ENCODE measurements at regions of chr10 and their contacts with region 1.

Region 1: DNA sequence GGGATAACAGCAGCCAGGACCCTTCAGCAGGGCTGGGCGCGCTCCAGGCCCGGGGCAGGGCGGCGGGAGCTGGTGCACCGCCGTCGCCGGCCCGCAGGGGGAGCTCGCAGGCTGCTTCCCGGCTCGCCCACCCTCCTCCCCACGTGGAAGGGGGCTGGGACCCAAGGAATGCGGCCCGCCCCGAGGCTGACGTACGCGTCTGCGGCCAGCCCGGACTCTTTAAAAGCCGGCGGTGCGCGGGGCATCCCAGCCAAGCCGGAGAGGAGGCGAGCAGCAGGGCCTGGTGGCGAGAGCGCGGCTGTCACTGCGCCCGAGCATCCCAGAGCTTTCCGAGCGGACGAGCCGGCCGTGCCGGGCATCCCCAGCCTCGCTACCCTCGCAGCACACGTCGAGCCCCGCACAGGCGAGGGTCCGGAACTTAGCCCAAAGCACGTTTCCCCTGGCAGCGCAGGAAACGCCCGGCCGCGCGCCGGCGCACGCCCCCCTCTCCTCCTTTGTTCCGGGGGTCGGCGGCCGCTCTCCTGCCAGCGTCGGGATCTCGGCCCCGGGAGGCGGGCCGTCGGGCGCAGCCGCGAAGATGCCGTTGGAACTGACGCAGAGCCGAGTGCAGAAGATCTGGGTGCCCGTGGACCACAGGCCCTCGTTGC is at the start of gene PFKFB3:
- DNase-seq: peak; percentile 94 to 97
- H3K4me3 ChIP-seq: peak within 1 kb of the TSS; percentile 85 to 89
- H3K27ac ChIP-seq: peak within 1 kb of the TSS; percentile 94 to 95
- H3K4me1 ChIP-seq: peaks cover 0 to 58% (median 31%) of the 10 kb centered on the region in 4 donors
- H3K27me3 ChIP-seq: no peaks in the 10 kb centered on the region
- CTCF ChIP-seq: peak; percentile 97 to 99

Region 2: DNA sequence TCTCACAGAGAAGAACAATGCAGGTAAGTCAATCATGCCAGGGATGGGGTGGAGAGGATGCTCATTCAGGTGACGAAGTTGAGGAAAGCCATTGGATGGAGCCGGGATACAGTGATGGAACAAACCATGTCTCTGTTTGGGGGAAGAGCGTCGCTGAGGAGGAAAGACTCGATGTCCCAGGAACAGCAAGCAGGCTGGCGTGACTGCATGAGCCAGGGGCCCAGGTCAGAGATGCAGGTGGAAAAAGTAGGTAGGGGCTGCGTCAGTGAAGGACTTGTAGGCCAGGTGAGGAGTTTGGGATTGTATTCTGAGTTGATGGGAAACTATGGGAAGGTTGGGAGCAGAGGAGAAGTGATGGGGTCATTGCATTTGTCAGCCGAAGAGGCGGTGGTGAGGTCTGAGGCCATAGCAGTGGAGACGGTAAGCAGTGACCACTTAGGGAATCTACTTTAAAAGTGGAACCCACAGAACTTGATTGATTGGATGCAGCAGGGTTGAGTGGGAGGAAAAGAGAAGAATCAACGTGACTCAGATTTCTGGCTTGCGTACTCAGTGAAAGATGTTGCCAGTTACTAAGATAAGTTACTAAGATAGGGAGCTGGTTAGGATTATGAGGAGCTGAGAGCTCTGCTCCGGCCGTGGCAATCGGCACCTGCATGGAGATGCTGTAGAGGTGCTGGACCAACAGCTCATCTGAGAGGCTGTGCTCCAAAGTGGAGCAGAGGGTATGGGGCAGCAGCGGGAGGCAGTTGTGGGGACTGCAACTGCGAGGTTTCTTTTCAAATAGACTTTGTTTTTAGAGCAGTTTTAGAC is 128.1 kb before region 1 on chr10:
- intact Hi-C with region 1: no loop called
- DNase-seq: peak in 1 of 2 donors; percentile 21
- H3K4me3 ChIP-seq: no peak overlapping the region
- H3K27ac ChIP-seq: no peak overlapping the region
- H3K4me1 ChIP-seq: no peaks in the 10 kb centered on the region
- H3K27me3 ChIP-seq: peaks cover 0 to 31% of the 10 kb centered on the region in 2 donors
- CTCF ChIP-seq: no peak

Region 3: DNA sequence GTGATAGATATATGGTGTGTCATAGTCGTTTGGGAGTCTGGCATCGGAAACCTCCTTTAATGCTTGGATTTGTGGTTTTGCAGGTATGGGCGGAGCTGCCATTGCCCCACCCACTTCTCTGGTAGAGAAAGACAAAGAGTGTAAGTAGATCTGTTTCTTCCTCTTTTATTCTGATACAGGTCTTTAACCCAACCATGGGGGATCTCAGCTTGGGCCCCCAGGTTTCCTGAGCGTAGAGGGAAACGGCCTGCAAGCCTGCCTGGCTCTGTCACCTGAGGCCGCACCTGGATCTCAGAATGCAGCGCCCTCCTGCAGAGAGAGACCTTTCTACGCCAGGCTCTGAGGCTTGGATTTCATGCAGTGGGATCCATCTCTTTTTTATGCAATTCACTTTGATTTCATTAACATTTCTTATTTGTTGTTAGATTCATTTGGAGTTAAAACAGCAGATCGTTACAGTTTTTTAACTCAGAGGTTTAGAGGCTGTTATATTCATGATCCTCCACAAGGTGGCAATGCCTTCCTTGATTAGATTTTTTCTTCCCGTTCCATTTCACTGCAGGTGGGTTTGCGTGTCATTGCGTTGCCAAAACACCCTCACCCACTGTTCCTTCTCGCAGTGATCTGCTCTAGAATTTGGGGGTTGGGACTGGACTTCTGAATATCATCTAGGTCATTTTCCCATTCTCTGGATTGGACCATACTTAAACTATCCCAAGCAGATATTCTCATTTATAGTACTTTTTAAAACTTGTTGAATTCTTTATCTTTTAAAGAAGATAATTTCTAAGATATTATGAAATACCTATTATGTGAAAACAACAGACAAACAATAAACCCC is 94.0 kb before region 1 on chr10:
- intact Hi-C with region 1: loop called (anchors 5 kb)
- DNase-seq: no peak
- H3K4me3 ChIP-seq: no peak overlapping the region
- H3K27ac ChIP-seq: no peak overlapping the region
- H3K4me1 ChIP-seq: peaks cover 0 to 3% (median 0%) of the 10 kb centered on the region in 4 donors
- H3K27me3 ChIP-seq: no peaks in the 10 kb centered on the region
- CTCF ChIP-seq: peak; percentile 77 to 82

Region 4: GRCh38 chr10:6144406-6145165 is 58.2 kb before region 1 on chr10:
- intact Hi-C with region 1: loop called (anchors 2 kb)
- DNase-seq: peak; percentile 92 to 94
- H3K4me3 ChIP-seq: peak overlapping the region; percentile 82 to 92
- H3K27ac ChIP-seq: peak overlapping the region; percentile 82 to 89
- H3K4me1 ChIP-seq: peaks cover 0 to 46% (median 23%) of the 10 kb centered on the region in 4 donors
- H3K27me3 ChIP-seq: peaks cover 0 to 3% of the 10 kb centered on the region in 2 donors
- CTCF ChIP-seq: no peak

Region 5: GRCh38 chr10:6163364-6164270 is 39.2 kb before region 1 on chr10:
- intact Hi-C with region 1: loop called (anchors 5 kb)
- DNase-seq: peak; percentile 81 to 95
- H3K4me3 ChIP-seq: peak overlapping the region; percentile 71 to 79
- H3K27ac ChIP-seq: peak overlapping the region; percentile 79 to 87
- H3K4me1 ChIP-seq: peaks cover 0 to 27% (median 12%) of the 10 kb centered on the region in 4 donors
- H3K27me3 ChIP-seq: no peaks in the 10 kb centered on the region
- CTCF ChIP-seq: peak in 1 of 2 experiments; percentile 20

Region 6: DNA sequence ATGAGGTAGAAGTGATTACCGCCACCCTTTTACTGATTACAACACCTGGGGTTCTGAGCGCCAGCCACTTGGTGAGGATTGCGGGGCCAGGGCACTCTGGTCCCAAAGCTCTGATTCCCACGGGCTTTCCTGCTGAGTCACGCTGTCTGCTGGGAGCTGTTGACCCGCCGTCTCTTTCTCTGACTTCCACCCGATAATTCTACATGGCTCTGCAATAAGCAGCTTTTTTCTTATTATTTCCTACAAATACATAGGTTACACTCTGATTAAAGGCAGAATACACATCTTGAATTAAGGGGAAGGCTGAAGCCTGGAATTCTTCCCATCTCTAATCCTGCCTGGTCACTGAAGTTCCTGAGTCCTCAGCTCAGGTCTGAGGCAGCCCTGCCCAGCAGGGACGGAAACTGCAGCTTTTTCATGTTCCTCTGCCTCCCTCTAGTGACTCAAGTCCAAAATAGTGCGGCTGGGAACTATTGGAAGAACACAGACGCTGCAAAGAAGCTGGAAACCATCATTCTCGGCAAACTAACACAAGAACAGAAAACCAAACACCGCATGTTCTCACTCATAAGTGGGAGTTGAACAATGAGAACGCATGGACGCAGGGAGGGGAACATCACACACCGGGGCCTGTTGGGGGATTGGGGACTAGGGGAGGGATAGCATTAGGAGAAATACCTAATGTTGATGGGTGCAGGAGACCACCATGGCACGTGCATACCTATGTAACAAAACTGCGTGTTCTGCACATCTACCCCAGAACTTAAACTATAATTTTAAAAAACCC is 198.9 kb after region 1 on chr10:
- intact Hi-C with region 1: loop called (anchors 5 kb)
- DNase-seq: peak; percentile 75 to 86
- H3K4me3 ChIP-seq: peak overlapping the region; percentile 40 to 45
- H3K27ac ChIP-seq: peak overlapping the region; percentile 53 to 63
- H3K4me1 ChIP-seq: peaks cover 0 to 27% (median 15%) of the 10 kb centered on the region in 4 donors
- H3K27me3 ChIP-seq: no peaks in the 10 kb centered on the region
- CTCF ChIP-seq: peak; percentile 71 to 87

Measured in tibial artery (tissue), 4 donors.